OCI-LY7 (cell line): ENCODE measurements at regions of chrX and their contacts with region 1.

Region 1: DNA sequence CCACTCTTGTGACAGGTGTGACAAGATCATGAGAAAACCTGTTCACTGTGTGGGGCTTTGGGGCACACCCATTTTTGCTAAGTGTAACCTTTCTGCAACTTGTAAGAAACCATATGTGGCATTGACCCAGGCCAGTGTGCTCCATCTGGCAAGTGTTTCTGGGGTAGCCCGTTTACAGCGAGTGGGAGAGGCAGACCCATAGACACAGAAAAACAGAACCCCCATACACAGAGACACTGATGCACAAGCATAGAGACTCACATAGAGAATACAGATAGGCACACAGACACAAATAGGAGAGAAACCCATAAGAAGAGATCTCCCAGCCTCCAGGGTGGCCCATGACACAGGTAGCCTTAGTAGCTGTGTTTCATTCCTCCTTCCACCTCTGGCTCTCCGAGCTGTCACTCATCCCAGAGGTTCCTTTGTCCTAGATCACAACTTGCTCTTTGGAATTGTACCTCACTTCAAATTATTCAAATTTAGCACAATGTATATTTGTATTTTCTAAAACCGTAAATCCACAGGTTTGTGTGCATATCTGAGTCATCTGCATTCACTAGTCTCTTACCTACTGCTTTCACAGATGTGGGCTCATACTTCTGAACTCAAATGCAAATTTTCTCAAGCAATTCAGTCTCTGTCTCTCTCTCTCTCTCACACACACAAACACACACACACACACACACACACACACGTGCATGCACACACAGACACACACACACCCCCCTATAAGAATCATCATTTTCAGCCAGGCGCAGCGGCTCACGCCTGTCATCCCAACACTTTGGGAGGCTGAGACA is 114.4 kb downstream of the SH3KBP1 start:
- DNase-seq: peak; percentile 52
- H3K4me3 ChIP-seq: peak overlapping the region; percentile 62
- H3K27ac ChIP-seq: peak overlapping the region; percentile 100
- H3K4me1 ChIP-seq: peaks cover 89% of the 10 kb centered on the region
- CTCF ChIP-seq: no peak

Region 2: GRCh38 chrX:19544693-19545305 is 228.2 kb before region 1 on chrX:
- CTCF ChIA-PET with region 1: no interaction called
- POLR2A ChIA-PET with region 1: no interaction called
- intact Hi-C with region 1: no loop called
- DNase-seq: peak; percentile 58
- H3K4me3 ChIP-seq: no peak overlapping the region
- H3K27ac ChIP-seq: no peak overlapping the region
- H3K4me1 ChIP-seq: no peaks in the 10 kb centered on the region
- CTCF ChIP-seq: peak; percentile 84

Region 3: GRCh38 chrX:19682712-19683331 is 90.2 kb before region 1 on chrX:
- CTCF ChIA-PET with region 1: no interaction called
- POLR2A ChIA-PET with region 1: no interaction called
- intact Hi-C with region 1: no loop called
- DNase-seq: no peak
- H3K4me3 ChIP-seq: no peak overlapping the region
- H3K27ac ChIP-seq: no peak overlapping the region
- H3K4me1 ChIP-seq: peaks cover 13% of the 10 kb centered on the region
- CTCF ChIP-seq: no peak

Region 4: GRCh38 chrX:19811807-19812604 is 39.0 kb after region 1 on chrX:
- CTCF ChIA-PET with region 1: no interaction called
- POLR2A ChIA-PET with region 1: interaction called, 4 read pairs
- intact Hi-C with region 1: loop called (anchors 5 kb)
- DNase-seq: peak; percentile 68
- H3K4me3 ChIP-seq: peak overlapping the region; percentile 43
- H3K27ac ChIP-seq: peak overlapping the region; percentile 77
- H3K4me1 ChIP-seq: peaks cover 81% of the 10 kb centered on the region
- CTCF ChIP-seq: no peak

Region 5: GRCh38 chrX:19840899-19841648 is 68.0 kb after region 1 on chrX:
- CTCF ChIA-PET with region 1: no interaction called
- POLR2A ChIA-PET with region 1: interaction called, 3 read pairs
- intact Hi-C with region 1: loop called (anchors 2 kb)
- DNase-seq: peak; percentile 55
- H3K4me3 ChIP-seq: peak overlapping the region; percentile 46
- H3K27ac ChIP-seq: peak overlapping the region; percentile 81
- H3K4me1 ChIP-seq: peaks cover 51% of the 10 kb centered on the region
- CTCF ChIP-seq: no peak